GM23248 (cell line): ENCODE measurements at regions of chr6 and their contacts with region 1.

Region 1: DNA sequence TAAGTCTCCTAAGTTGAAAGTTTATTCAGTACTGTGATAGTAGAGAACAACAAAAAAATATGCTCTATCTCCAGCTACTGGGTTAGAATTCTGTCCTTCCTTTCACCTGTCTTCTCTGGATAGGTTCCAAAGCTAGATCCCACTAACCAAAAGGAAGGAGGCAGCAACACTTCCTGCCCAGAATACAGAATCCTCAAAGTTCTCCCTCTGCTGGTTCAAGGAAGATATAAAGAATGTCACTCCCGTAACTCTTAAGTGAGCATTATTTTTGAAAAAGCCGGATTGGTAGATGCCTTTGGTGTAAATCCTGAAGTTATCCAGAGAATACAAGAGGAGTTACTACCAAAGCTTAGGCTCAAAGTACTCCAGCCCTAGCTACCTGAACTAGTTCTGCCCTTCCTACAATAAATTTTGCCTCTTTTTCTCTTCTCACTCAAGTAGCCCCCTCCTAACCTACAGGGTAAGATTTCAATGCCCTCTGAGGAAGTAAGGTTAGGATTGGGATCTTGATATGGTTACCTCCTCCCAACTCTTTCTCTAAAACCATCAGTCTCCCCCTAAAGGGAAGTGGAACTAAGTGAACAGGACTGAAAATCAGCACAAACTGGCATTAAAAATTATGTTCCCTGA is 26.0 kb upstream of the CRIP3 start:
- DNase-seq: peak; percentile 69
- H3K4me3 ChIP-seq: no peak overlapping the region
- H3K27ac ChIP-seq: no peak overlapping the region
- H3K4me1 ChIP-seq: no peaks in the 10 kb centered on the region
- H3K27me3 ChIP-seq: no peaks in the 10 kb centered on the region

Region 2: DNA sequence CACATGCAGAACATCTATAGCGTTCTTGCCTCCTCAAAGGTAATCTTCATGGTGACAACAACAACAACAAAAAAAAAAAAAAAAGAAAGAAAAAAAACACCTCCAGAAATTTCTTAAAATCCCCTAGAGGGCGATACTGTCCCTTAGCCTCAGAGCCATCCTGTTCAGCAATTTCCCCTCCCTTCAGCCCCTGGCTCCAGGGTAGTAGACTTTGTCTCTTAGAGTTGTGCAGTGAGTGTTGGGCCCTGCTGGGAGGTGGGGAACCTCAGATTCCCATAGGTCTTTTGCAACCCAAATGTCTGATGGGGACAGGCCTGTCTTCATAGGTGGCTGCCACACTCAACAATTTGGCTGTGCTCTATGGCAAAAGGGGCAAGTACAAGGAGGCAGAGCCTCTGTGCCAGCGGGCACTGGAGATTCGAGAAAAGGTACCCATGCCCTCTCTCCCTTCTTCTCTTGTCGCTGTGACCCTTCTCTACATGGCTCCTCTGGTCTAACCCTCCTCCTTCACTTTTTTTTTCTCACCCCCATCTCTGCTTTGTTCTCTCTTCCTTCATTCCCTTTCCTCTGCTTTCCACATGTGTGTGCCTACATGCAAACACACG is 264.5 kb before region 1 on chr6:
- in situ Hi-C with region 1: no loop called
- DNase-seq: peak; percentile 77
- H3K4me3 ChIP-seq: no peak overlapping the region
- H3K27ac ChIP-seq: no peak overlapping the region
- H3K4me1 ChIP-seq: peaks cover 6% of the 10 kb centered on the region
- H3K27me3 ChIP-seq: no peaks in the 10 kb centered on the region

Region 3: GRCh38 chr6:43250992-43251373 is 83.6 kb before region 1 on chr6:
- in situ Hi-C with region 1: loop called (anchors 10 kb)
- DNase-seq: peak; percentile 21
- H3K4me3 ChIP-seq: no peak overlapping the region
- H3K27ac ChIP-seq: no peak overlapping the region
- H3K4me1 ChIP-seq: no peaks in the 10 kb centered on the region
- H3K27me3 ChIP-seq: peaks cover 43% of the 10 kb centered on the region